PC-3 (cell line): ENCODE measurements at regions of chr14 and their contacts with region 1.

Region 1: GRCh38 chr14:44438936-44439335 is 68.1 kb downstream of the FSCB start:
- DNase-seq: peak; percentile 66
- ATAC-seq: peak; percentile 95
- H3K4me3 ChIP-seq: no peak overlapping the region
- H3K27ac ChIP-seq: 0 out of 2 replicates have a peak overlapping the region, but pooled peaks have one; percentile 38
- H3K4me1 ChIP-seq: peaks cover 8% of the 10 kb centered on the region
- H3K27me3 ChIP-seq: no peaks in the 10 kb centered on the region
- CTCF ChIP-seq: no peak

Region 2: GRCh38 chr14:44316647-44317433 is 122.1 kb before region 1 on chr14:
- CTCF ChIA-PET with region 1: no interaction called
- POLR2A ChIA-PET with region 1: no interaction called
- intact Hi-C with region 1: loop called (anchors 5 kb)
- DNase-seq: peak; percentile 98
- ATAC-seq: peak; percentile 100
- H3K4me3 ChIP-seq: no peak overlapping the region; the same call in 1 of the 2 replicates
- H3K27ac ChIP-seq: peak overlapping the region; percentile 91
- H3K4me1 ChIP-seq: peaks cover 5% of the 10 kb centered on the region
- H3K27me3 ChIP-seq: no peaks in the 10 kb centered on the region
- CTCF ChIP-seq: no peak

Region 3: GRCh38 chr14:44479375-44479774 is 40.4 kb after region 1 on chr14:
- CTCF ChIA-PET with region 1: no interaction called
- POLR2A ChIA-PET with region 1: no interaction called
- intact Hi-C with region 1: no loop called
- DNase-seq: peak; percentile 9
- ATAC-seq: no peak
- H3K4me3 ChIP-seq: no peak overlapping the region
- H3K27ac ChIP-seq: no peak overlapping the region
- H3K4me1 ChIP-seq: no peaks in the 10 kb centered on the region
- H3K27me3 ChIP-seq: no peaks in the 10 kb centered on the region
- CTCF ChIP-seq: 0 out of 2 replicates have a peak, but pooled peaks have one; percentile 18

Region 4: GRCh38 chr14:44626423-44626822 is 187.5 kb after region 1 on chr14:
- CTCF ChIA-PET with region 1: no interaction called
- POLR2A ChIA-PET with region 1: no interaction called
- intact Hi-C with region 1: loop called (anchors 5 kb)
- DNase-seq: peak; percentile 69
- ATAC-seq: peak; percentile 91
- H3K4me3 ChIP-seq: no peak overlapping the region
- H3K27ac ChIP-seq: peak overlapping the region; percentile 21
- H3K4me1 ChIP-seq: 0 out of 2 replicates have a peak, but pooled peaks cover 7% of the 10 kb centered on the region
- H3K27me3 ChIP-seq: no peaks in the 10 kb centered on the region
- CTCF ChIP-seq: no peak

Region 5: DNA sequence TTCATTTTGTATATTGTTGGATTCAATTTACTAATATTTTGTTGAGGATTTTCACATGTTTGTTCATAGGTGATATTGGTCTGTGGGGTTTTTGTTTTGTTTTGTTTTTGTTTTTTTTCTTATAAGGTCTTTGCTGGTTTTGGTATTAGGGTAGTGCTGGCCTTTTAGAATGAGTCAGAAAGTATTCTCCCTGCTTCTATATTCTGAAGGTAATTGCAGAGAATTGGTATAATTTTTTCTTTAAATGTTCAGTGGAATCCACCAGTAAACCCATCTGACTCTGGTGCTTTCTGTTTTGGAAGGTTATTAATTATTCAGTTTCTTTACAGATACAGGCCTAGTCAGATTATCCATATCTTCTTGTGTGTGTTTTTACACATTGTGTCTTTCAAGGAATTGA is 532.0 kb after region 1 on chr14:
- CTCF ChIA-PET with region 1: no interaction called
- POLR2A ChIA-PET with region 1: no interaction called
- intact Hi-C with region 1: no loop called
- DNase-seq: no peak
- ATAC-seq: no peak
- H3K4me3 ChIP-seq: no peak overlapping the region
- H3K27ac ChIP-seq: no peak overlapping the region
- H3K4me1 ChIP-seq: peaks cover 21% of the 10 kb centered on the region; the same call in 1 of the 2 replicates
- H3K27me3 ChIP-seq: no peaks in the 10 kb centered on the region
- CTCF ChIP-seq: no peak